SK-N-SH (cell line): ENCODE measurements at regions of chr5 and their contacts with region 1.

Region 1: GRCh38 chr5:131589510-131590348 is 45.3 kb downstream of the RAPGEF6 start:
- DNase-seq: peak; percentile 83
- H3K4me3 ChIP-seq: no peak overlapping the region
- H3K27ac ChIP-seq: 0 out of 4 replicates have a peak overlapping the region, but pooled peaks of 1 of the 2 experiments have one; percentile 7
- H3K4me1 ChIP-seq: peaks cover 0 to 3% of the 10 kb centered on the region in 2 experiments; a peak in 1 of 4 replicates
- H3K27me3 ChIP-seq: no peaks in the 10 kb centered on the region
- CTCF ChIP-seq: peak; percentile 90
- EP300 ChIP-seq: no peak
- RAD21 ChIP-seq: peak; percentile 95

Region 2: GRCh38 chr5:131316026-131316425 is 273.7 kb before region 1 on chr5:
- CTCF ChIA-PET with region 1: no interaction called
- POLR2A ChIA-PET with region 1: no interaction called
- DNase-seq: no peak
- H3K4me3 ChIP-seq: no peak overlapping the region
- H3K27ac ChIP-seq: no peak overlapping the region
- H3K4me1 ChIP-seq: peaks cover 0 to 8% of the 10 kb centered on the region in 2 experiments; a peak in 3 of 4 replicates
- H3K27me3 ChIP-seq: no peaks in the 10 kb centered on the region
- CTCF ChIP-seq: no peak
- EP300 ChIP-seq: no peak
- RAD21 ChIP-seq: no peak

Region 3: DNA sequence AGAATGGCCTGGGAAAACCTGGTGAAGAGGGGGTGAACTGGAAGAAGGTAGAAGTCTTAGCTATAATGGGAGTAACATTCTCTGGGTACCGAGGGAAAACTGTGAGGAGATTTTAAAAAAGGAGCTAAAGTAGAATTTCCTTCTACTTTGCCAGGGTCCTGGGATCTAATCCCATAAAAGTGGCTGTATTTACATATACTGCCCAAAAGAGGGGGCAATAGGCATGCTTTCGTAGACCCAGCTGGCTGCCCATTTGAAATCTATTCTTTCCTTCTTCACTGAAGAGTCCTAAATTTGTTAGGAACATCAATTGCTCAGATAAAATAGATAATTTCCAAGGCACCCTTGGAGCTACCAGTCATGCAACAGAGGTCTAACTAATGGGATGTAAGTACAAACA is 166.7 kb before region 1 on chr5:
- CTCF ChIA-PET with region 1: interaction called, 34 read pairs
- POLR2A ChIA-PET with region 1: no interaction called
- DNase-seq: peak; percentile 52
- H3K4me3 ChIP-seq: no peak overlapping the region
- H3K27ac ChIP-seq: no peak overlapping the region
- H3K4me1 ChIP-seq: no peaks in the 10 kb centered on the region
- H3K27me3 ChIP-seq: no peaks in the 10 kb centered on the region
- CTCF ChIP-seq: peak; percentile 75
- EP300 ChIP-seq: no peak
- RAD21 ChIP-seq: peak; percentile 84

Region 4: DNA sequence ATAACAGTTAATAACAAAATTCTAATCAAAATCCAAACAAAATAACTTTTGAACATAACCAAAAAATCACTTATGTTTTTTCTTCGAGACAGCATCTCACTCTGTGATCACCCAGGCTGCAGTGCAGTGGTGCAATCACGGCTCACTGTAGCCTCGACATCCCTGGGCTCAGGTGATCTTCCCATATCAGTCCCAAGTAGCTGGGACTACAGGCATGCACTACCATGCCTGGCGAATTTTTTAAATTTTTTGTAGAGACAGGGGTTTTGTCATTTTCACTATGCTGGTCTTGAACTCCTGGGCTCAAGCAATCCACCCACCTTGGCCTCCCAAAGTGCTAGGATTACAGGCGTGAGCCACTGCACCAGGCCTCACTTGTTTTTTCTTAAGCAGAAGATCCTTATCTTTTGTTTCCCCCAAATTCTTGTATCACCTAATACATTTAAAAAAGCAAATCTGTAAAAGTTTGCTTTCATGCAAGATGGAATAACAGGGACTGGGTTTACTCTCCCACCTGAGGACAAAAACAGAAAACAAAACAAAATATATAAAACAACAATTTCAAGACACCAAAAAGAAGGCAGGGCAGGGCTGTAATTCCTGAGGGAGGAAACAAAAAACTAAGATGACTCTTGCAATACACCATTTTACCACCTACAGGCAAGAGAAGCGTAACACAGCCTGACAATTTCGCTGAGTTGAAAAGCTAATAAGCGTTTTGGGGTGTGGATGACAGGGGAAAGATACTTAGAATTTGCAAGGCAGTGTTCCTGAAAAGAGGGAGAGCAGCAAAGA is 26.1 kb before region 1 on chr5:
- CTCF ChIA-PET with region 1: interaction called, 31 read pairs
- POLR2A ChIA-PET with region 1: no interaction called
- DNase-seq: no peak
- H3K4me3 ChIP-seq: no peak overlapping the region
- H3K27ac ChIP-seq: no peak overlapping the region
- H3K4me1 ChIP-seq: no peaks in the 10 kb centered on the region; a peak in 1 of 4 replicates
- H3K27me3 ChIP-seq: no peaks in the 10 kb centered on the region
- CTCF ChIP-seq: no peak
- EP300 ChIP-seq: no peak
- RAD21 ChIP-seq: no peak

Region 5: GRCh38 chr5:131605086-131605485 is 15.4 kb after region 1 on chr5:
- CTCF ChIA-PET with region 1: interaction called, 20 read pairs
- POLR2A ChIA-PET with region 1: no interaction called
- DNase-seq: no peak
- H3K4me3 ChIP-seq: no peak overlapping the region
- H3K27ac ChIP-seq: no peak overlapping the region
- H3K4me1 ChIP-seq: peaks cover 0 to 4% of the 10 kb centered on the region in 2 experiments; a peak in 2 of 4 replicates
- H3K27me3 ChIP-seq: no peaks in the 10 kb centered on the region
- CTCF ChIP-seq: no peak
- EP300 ChIP-seq: no peak
- RAD21 ChIP-seq: no peak

Region 6: GRCh38 chr5:131628990-131629389 is 39.3 kb after region 1 on chr5:
- CTCF ChIA-PET with region 1: interaction called, 17 read pairs
- POLR2A ChIA-PET with region 1: no interaction called
- DNase-seq: no peak
- H3K4me3 ChIP-seq: no peak overlapping the region
- H3K27ac ChIP-seq: peak overlapping the region in 1 of 2 experiments; percentile 24; a peak in 1 of 4 replicates
- H3K4me1 ChIP-seq: peaks cover 0 to 5% of the 10 kb centered on the region in 2 experiments; a peak in 2 of 4 replicates
- H3K27me3 ChIP-seq: no peaks in the 10 kb centered on the region
- CTCF ChIP-seq: no peak
- EP300 ChIP-seq: no peak; a peak in 1 of 4 replicates
- RAD21 ChIP-seq: no peak

Region 7: DNA sequence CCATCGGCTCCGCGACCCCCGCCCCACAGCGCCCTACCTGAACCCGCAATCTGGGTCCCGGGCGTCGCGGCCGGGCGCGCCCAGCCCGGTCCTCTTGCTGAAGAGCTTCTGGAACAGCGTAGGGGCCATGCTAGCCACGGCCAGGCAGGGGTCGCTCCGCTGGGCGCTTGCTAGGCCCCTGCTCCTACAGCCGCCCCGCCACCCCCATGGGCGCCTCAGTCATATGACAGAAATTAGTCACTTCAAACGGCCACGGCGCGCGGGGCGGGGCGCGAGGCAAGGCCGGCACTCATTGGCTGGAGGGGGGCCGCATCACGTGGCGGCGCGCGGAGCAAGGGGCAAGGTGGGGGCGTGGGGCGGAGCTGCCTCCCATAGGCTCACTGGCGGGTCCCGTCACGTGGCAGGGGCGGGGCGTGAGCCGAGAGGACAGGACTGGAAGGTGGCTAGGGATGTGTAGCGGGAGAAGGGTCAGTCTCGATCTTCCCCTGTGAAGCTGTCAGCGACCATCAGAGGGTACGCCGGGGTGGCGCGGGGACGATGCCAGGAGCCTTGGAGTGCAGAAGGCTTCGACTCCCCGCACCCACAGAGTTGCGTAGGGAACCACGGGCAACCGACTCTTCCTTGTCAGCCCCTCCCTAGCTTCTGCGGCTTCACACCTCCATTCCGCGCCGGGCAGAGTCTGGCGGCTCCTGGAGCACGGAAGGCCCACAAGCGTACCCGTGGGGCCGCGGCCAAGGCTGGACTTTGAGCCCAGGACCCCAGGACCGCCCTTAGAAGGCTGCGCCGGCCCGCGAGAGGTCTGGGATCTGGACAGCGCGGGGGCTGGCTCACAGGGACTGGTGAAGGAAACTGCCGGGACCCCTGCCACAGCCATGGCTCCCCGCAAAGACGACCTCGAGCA is 207.3 kb after region 1 on chr5 and contains the start of gene FNIP1:
- CTCF ChIA-PET with region 1: interaction called, 19 read pairs
- POLR2A ChIA-PET with region 1: interaction called, 4 read pairs
- DNase-seq: peak; percentile 100
- H3K4me3 ChIP-seq: peak within 1 kb of the TSS; percentile 81 to 94
- H3K27ac ChIP-seq: peak within 1 kb of the TSS; percentile 90
- H3K4me1 ChIP-seq: peaks cover 0 to 12% of the 10 kb centered on the region in 2 experiments; a peak in 2 of 4 replicates
- H3K27me3 ChIP-seq: no peaks in the 10 kb centered on the region
- CTCF ChIP-seq: peak; percentile 13; the same call in 1 of the 2 replicates
- EP300 ChIP-seq: peak in 1 of 2 experiments; percentile 40; a peak in 1 of 4 replicates
- RAD21 ChIP-seq: no peak
- polyA plus RNA-seq, gene FNIP1: 2.4 and 3.7 TPM in 2 replicates

Region 8: GRCh38 chr5:132064738-132065331 is 475.1 kb after region 1 on chr5:
- CTCF ChIA-PET with region 1: interaction called, 67 read pairs
- POLR2A ChIA-PET with region 1: no interaction called
- DNase-seq: peak; percentile 87
- H3K4me3 ChIP-seq: peak overlapping the region in 1 of 2 experiments; percentile 43; a peak in 1 of 4 replicates
- H3K27ac ChIP-seq: no peak overlapping the region
- H3K4me1 ChIP-seq: no peaks in the 10 kb centered on the region
- H3K27me3 ChIP-seq: no peaks in the 10 kb centered on the region
- CTCF ChIP-seq: peak; percentile 89
- EP300 ChIP-seq: no peak
- RAD21 ChIP-seq: peak; percentile 74